AG04450 (cell line): ENCODE measurements at regions of chr16 and their contacts with region 1.

Region 1: GRCh38 chr16:1054660-1055556 is 17.6 kb upstream of the SSTR5 start:
- DNase-seq: peak; percentile 18
- H3K4me3 ChIP-seq: no peak overlapping the region
- H3K27ac ChIP-seq: no peak overlapping the region
- H3K27me3 ChIP-seq: peaks cover 10% of the 10 kb centered on the region
- CTCF ChIP-seq: peak; percentile 83

Region 2: GRCh38 chr16:711548-712320 is 343.2 kb before region 1 on chr16:
- CTCF ChIA-PET with region 1: interaction called, 20 read pairs
- POLR2A ChIA-PET with region 1: no interaction called
- DNase-seq: no peak
- H3K4me3 ChIP-seq: no peak overlapping the region
- H3K27ac ChIP-seq: no peak overlapping the region
- H3K27me3 ChIP-seq: peaks cover 15% of the 10 kb centered on the region
- CTCF ChIP-seq: peak; percentile 88

Region 3: DNA sequence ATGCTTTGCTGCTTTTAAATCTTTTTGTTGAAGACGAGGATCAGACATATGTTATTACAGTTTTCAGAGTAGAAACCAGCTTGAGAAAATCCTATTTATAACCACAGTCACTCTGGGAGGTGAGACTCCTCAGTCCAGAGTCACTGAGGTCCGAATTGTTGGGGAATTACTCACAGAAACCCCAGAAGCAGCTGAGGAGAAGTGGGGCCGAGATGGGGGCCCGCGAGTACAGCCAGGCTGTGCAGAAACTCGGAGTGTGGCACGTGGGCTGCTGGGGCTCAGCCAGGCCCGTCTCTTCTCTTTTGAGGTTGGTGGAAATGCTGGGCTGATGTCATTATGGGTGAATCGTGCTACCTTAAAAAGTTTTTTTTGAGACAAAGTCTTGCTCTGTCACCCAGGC is 239.9 kb before region 1 on chr16:
- CTCF ChIA-PET with region 1: interaction called, 11 read pairs
- POLR2A ChIA-PET with region 1: no interaction called
- DNase-seq: peak; percentile 26
- H3K4me3 ChIP-seq: no peak overlapping the region
- H3K27ac ChIP-seq: peak overlapping the region; percentile 11
- H3K27me3 ChIP-seq: peaks cover 19% of the 10 kb centered on the region
- CTCF ChIP-seq: no peak

Region 4: GRCh38 chr16:1105888-1106620 is 51.1 kb after region 1 on chr16:
- CTCF ChIA-PET with region 1: interaction called, 18 read pairs
- POLR2A ChIA-PET with region 1: no interaction called
- DNase-seq: peak; percentile 10
- H3K4me3 ChIP-seq: no peak overlapping the region
- H3K27ac ChIP-seq: no peak overlapping the region
- H3K27me3 ChIP-seq: peaks cover 32% of the 10 kb centered on the region
- CTCF ChIP-seq: peak; percentile 83

Region 5: DNA sequence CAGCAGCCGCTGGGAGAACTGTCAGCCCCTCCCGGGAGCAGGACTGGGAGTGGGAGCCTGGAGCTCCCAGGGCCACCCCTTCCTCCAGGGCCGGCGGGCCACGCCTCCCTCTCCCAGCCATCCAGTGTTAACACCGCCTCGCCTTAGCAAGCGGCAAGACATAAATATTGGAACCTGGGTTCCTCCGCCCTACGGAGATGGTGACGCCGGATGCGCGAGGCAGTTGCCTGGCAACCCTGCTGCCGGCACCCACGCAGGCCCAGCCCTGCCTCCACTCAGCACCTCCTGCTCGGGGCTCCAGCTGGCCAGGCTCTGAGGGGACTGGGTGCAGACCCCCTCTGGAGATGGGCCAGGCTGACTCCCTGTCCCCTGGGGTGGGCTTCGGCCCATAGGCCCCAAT is 70.6 kb after region 1 on chr16:
- CTCF ChIA-PET with region 1: no interaction called
- POLR2A ChIA-PET with region 1: no interaction called
- DNase-seq: peak; percentile 20
- H3K4me3 ChIP-seq: no peak overlapping the region
- H3K27ac ChIP-seq: no peak overlapping the region
- H3K27me3 ChIP-seq: peaks cover 11% of the 10 kb centered on the region
- CTCF ChIP-seq: no peak